ENCODE measurements at regions of chr17 and their contacts with region 1.

Region 1: DNA sequence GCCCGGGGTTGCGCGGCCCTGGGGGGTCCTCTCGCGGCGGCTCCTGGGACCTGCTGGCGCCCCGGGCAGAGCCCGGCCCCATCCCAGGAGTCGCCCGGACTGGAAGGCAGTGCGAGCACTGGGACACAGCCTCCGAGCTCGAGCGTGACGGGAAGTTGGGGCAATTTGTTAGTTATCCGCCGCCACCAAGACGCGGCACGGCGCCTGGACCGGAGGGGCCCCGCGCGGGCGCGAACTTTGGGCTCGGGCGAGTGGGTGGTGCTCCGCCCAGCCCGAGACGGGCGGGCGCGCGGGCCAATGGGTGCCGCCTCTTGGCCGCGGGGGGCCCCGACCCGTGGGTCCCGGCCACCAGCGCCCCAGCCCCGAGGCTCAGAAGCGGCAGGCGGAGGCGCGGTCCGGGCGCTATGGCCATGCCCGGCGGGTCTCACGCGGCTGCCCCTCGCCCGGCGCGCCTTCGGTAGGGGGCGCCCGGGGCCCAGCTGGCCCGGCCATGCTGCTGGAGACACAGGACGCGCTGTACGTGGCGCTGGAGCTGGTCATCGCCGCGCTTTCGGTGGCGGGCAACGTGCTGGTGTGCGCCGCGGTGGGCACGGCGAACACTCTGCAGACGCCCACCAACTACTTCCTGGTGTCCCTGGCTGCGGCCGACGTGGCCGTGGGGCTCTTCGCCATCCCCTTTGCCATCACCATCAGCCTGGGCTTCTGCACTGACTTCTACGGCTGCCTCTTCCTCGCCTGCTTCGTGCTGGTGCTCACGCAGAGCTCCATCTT is at the start of gene ADORA2B:
- DNase-seq: peak; percentile 70
- H3K4me3 ChIP-seq: peak within 1 kb of the TSS; percentile 73 to 99 (median 86)
- H3K27ac ChIP-seq: peak within 1 kb of the TSS; percentile 77
- H3K4me1 ChIP-seq: peaks cover 29% of the 10 kb centered on the region
- H3K27me3 ChIP-seq: no peaks in the 10 kb centered on the region
- CTCF ChIP-seq: peak; percentile 43 to 65
- total RNA-seq, gene ADORA2B: 44.9 to 73.7 TPM

Region 2: DNA sequence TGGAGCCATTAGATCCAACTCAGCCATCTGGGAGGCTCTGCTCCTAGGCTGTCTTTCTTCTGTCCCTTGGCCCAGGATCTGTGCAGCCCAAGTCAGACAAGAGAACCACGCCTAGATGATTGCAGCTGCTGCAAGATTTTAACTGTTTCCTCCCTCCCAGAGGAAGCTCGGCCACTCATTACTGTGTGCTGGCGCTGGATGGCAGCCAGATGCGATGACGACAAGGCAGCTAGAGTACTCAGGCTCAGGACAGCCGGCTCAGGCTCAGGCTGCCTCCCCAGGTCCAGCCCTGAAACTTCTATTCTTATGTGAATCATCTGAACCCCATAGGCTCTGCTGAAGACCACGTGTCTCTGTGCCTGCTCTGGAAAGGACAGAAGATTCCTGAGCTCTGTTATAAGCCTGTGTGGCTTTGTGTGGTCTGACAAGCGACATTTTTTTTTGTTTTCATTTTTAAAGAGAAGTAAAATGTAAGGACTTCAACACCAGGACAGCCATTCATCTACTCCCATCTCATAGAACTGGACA is 293.3 kb before region 1 on chr17:
- CTCF ChIA-PET with region 1: no interaction called
- dilution Hi-C with region 1: loop called (anchors 10 kb)
- in situ Hi-C with region 1: no loop called
- intact Hi-C with region 1: no loop called
- DNase-seq: peak; percentile 99
- H3K4me3 ChIP-seq: peak overlapping the region; percentile 55 to 67 (median 61)
- H3K27ac ChIP-seq: peak overlapping the region; percentile 77
- H3K4me1 ChIP-seq: peaks cover 41% of the 10 kb centered on the region
- H3K27me3 ChIP-seq: no peaks in the 10 kb centered on the region
- CTCF ChIP-seq: no peak

Region 3: DNA sequence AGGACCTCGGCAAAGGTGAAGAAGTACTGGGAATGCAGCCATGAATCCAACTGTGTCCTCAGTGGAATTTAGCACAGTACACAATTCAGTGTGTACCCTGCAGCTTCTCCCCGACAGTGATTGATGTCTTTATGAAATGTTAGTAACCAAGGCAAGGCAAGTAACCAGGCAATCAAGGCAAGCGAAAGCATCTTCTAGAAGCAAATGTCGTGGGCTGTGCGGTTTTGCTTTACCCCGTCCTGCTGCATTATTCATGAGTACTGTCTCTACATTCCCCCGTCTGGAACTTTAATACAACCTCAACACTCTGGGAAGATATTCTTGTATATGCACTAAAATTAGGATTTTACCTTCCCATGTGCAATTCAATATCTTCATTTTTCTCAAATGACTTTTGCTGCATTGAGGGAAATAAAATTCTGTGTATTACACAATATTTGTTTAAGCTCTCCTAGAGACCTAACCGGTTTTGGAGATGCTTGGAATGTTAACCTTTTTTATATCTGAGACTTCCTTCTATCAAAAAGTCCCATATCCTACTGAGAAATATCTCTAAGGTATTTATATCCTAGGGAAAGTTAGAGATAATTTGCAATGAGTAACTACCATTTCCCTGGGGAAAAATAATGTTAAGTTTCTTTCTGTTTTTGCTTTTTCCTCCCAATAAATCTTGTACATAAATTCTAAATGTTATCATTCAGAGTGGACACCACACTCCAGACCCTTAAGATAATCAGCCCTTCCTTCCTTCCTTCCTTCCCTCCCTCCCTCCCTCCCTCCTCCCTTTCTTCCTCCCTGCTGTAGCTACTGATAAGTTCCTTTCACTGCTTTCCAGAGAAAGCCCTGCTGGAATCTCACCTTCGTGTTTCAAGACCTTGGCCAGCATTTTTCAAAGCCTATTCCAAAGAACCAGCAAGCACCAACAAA is 52.0 kb before region 1 on chr17:
- CTCF ChIA-PET with region 1: no interaction called
- dilution Hi-C with region 1: loop called (anchors 5 kb)
- in situ Hi-C with region 1: no loop called
- intact Hi-C with region 1: no loop called
- DNase-seq: peak; percentile 46
- H3K4me3 ChIP-seq: no peak overlapping the region
- H3K27ac ChIP-seq: no peak overlapping the region
- H3K4me1 ChIP-seq: peaks cover 5% of the 10 kb centered on the region
- H3K27me3 ChIP-seq: no peaks in the 10 kb centered on the region
- CTCF ChIP-seq: no peak

Region 4: DNA sequence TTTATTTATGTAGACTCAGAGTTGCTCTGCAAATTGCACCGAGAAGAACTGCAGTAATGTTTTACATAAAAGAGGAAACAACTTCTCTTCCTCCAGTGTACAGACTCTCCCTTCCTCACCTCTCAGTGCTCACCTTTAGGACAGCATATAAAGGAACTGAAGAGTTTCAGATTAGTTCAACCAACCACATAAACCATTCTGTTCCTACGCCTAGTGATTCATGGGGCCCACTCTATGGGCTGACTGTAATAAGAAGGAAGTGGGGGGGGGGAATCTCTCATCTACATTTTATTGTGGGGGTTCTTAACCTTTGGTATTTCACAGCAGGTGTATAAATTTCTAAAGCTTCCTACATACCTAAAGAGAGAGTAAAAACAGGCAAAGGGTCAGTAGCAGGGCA is 36.3 kb after region 1 on chr17:
- CTCF ChIA-PET with region 1: no interaction called
- dilution Hi-C with region 1: loop called (anchors 5 kb)
- in situ Hi-C with region 1: no loop called
- intact Hi-C with region 1: loop called (anchors 1 kb)
- DNase-seq: peak; percentile 42
- H3K4me3 ChIP-seq: no peak overlapping the region
- H3K27ac ChIP-seq: peak overlapping the region; percentile 29
- H3K4me1 ChIP-seq: peaks cover 34% of the 10 kb centered on the region
- H3K27me3 ChIP-seq: no peaks in the 10 kb centered on the region
- CTCF ChIP-seq: no peak

Region 5: DNA sequence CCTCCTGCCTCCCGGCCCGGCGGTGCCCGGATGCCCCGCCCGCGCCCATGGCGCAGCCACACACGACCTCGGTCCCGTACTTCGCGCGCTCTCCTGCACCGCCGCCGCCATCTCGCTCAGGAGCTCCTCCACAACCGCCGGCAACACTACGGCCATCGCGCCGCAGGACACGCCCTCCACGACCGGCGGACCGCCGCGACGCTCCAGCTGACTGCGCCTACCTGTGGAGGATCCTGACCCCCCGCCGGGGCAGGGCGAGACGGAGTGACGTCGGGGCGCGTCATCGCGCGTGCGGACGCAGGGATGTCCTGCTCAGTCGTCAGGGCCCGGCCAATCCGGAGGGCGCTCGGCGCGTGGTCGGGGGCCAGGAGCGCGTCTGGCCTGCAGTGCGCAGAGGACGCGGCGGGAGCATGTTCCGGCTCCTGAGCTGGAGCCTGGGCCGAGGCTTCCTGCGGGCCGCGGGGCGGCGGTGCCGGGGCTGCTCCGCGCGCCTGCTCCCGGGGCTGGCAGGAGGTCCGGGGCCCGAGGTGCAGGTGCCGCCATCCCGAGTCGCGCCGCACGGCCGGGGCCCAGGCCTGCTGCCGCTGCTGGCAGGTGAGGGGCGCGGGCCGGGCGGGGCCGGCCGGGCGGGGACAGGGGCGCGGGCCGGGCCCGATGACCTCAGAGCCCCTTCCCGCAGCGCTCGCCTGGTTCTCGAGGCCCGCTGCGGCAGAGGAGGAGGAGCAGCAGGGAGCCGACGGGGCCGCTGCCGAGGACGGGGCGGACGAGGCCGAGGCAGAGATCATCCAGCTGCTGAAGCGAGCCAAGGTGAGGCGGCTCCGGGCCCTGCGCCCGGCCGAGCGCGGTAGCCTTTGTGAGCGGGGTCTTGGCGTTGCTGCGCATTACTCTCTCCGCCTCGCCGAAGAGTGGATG is 54.8 kb after region 1 on chr17 and contains the starts of genes TTC19 and ZSWIM7:
- CTCF ChIA-PET with region 1: interaction called, 15 read pairs
- dilution Hi-C with region 1: no loop called
- in situ Hi-C with region 1: no loop called
- intact Hi-C with region 1: loop called (anchors 1 kb)
- DNase-seq: peak; percentile 97
- H3K4me3 ChIP-seq: peak within 1 kb of the TSS; percentile 78 to 97 (median 79)
- H3K27ac ChIP-seq: peak within 1 kb of the TSS; percentile 87
- H3K4me1 ChIP-seq: peaks cover 22% of the 10 kb centered on the region
- H3K27me3 ChIP-seq: no peaks in the 10 kb centered on the region
- CTCF ChIP-seq: peak in 1 of 2 donors; percentile 23
- total RNA-seq, gene TTC19: 48.0 to 76.8 TPM
- total RNA-seq, gene ZSWIM7: 12.2 to 21.2 TPM